ENCODE measurements at regions of chr4 and their contacts with region 1.

Region 1: DNA sequence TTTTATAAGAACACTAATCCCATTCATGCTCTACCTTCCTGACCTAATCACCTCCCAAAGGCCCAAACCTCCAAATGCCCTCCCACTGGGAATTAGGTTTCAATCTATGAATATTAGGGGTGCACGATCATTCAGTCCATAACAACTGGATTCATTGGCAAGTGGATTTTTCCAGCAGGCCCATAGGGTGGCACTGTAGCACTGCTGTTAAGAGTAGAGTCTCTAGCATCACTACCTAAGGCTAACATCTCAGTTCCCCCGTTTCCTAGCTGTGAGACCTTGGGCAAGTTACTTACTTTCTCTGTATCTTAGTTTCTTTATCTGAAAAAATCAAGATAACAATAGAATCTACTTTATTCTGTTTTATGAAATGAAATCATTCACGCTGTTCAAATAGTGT is 315.8 kb downstream of the STIM2 start:
- DNase-seq: peak in 2 of 3 donors; percentile 26 to 51
- ATAC-seq: peak; percentile 82
- H3K4me3 ChIP-seq: no peak overlapping the region
- H3K4me1 ChIP-seq: no peaks in the 10 kb centered on the region
- CTCF ChIP-seq: peak; percentile 10

Region 2: DNA sequence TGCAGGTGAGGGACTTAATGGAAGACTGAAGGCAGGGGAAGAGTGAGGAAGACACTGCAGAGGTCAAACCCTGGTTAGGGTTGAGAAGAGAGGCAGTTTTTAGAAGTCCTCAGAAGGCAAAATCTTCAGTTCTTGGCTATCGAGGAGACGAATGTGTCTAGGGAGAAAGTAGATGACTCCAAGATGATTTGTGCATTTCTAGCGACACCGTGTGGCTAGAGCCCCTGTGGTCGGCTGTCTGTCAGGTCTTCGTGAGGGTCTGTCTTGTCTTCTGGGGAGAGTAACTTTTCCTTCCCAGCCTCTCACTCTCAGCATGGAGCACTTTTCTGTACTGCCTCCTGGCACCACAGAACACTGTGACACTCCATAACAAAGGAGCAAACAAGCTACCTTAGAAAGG is 142.3 kb after region 1 on chr4:
- intact Hi-C with region 1: loop called in 1 of 2 experiments (anchors 2 kb)
- DNase-seq: peak in 2 of 3 donors; percentile 56 to 76
- ATAC-seq: no peak
- H3K4me3 ChIP-seq: no peak overlapping the region
- H3K4me1 ChIP-seq: peaks cover 18% of the 10 kb centered on the region
- CTCF ChIP-seq: no peak

Measured in mucosa of descending colon (tissue), 3 donors.